Sciatic nerve (tissue), 2 donors: ENCODE measurements at regions of chr2 and their contacts with region 1.

Region 1: DNA sequence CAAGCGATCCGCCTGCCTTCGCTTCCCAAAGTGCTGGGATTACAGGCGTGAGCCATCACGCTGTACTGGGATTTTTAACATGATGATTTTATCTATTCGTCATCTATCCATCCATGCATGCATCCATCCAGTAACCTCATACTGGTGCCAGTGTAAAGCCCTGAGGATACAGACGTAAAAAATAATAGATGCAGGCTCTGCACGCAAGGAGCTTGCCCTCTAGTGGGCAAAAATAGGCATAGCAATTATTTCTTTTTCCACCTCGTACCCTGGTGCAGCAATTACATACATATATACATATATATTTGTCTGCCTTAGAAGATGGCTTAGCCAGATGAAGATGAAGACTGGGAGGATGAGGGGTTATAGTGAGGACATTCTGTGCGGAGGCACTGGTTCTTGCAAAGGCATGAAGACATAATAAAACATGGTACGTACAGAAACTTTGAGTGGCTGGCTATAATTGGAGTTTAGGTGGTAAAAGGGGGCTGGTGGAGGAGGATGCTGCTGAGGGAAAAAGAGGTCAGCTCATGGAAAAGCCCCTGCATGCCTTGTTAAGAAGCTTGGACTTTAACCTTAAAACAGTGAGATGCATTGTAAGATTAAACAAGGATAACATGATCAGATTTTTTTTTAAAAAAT is 19.6 kb upstream of the RPIA start:
- DNase-seq: no peak
- ATAC-seq: peak; percentile 67

Region 2: GRCh38 chr2:88590998-88591613 is 80.8 kb before region 1 on chr2:
- intact Hi-C with region 1: loop called (anchors 2 kb)
- DNase-seq: no peak
- ATAC-seq: peak; percentile 80

Region 3: DNA sequence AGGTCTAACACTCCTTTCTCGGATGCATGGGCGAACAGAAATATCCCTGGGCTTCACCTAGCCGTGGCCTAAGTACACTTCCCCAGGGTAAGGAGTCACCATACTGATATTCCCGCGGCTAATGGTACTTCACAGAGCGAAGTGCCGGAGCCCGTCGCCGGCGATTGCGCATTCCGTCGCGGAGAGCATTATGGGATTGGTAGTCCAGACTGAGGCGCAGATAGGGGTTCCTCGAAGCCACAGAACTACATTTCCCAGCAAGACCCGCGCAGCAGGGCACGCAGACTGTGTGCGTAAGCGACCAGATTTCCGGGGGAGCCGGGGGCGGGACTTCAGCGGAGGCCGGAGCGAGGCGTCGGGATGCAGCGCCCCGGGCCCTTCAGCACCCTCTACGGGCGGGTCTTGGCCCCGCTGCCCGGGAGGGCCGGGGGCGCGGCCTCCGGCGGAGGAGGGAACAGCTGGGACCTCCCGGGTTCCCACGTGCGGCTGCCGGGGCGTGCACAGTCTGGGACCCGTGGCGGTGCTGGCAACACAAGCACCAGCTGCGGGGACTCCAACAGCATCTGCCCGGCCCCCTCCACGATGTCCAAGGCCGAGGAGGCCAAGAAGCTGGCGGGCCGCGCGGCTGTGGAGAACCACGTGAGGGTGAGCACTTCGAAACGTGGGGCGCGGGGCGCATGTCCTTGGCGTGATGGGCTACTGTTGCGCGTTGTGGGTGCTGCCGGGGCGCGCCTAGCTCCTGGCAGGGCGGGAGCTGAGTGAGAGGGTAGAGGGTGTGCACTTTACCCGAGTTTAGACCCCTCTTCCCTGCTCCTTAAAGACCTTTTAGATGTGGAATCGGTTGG is 19.7 kb after region 1 on chr2 and contains the start of gene RPIA:
- intact Hi-C with region 1: no loop called
- DNase-seq: peak; percentile 99
- ATAC-seq: peak; percentile 100
- total RNA-seq, gene RPIA: 12.3 TPM